Activated CD4-positive, alpha-beta T cell treated with anti-CD3 and anti-CD28 coated beads, Interleukin-2, amount 10 ng/mL, durations not matched to agents 7 days and 5 days (primary cell): ENCODE measurements at regions of chr3 and their contacts with region 1.

Region 1: GRCh38 chr3:53134631-53135232 is 4.5 kb upstream of the RFT1 start:
- DNase-seq: peak; percentile 74
- H3K4me3 Mint-ChIP-seq: no peak overlapping the region
- H3K27ac Mint-ChIP-seq: no peak overlapping the region
- H3K4me1 Mint-ChIP-seq: peaks cover 17% of the 10 kb centered on the region
- H3K27me3 Mint-ChIP-seq: no peaks in the 10 kb centered on the region

Region 2: GRCh38 chr3:53144862-53145712 is 10.4 kb after region 1 on chr3:
- CTCF ChIA-PET with region 1: interaction called, 11 read pairs
- POLR2A ChIA-PET with region 1: no interaction called
- DNase-seq: no peak
- H3K4me3 Mint-ChIP-seq: no peak overlapping the region
- H3K27ac Mint-ChIP-seq: no peak overlapping the region
- H3K4me1 Mint-ChIP-seq: peaks cover 7% of the 10 kb centered on the region
- H3K27me3 Mint-ChIP-seq: no peaks in the 10 kb centered on the region